Gastrocnemius medialis (tissue), 4 donors: ENCODE measurements at regions of chr5 and their contacts with region 1.

Region 1: GRCh38 chr5:16934123-16934522 is 2.0 kb downstream of the MYO10 start:
- DNase-seq: no peak
- ATAC-seq: no peak
- H3K4me3 ChIP-seq: peak overlapping the region; percentile 71 to 99 (median 80)
- H3K27ac ChIP-seq: no peak overlapping the region
- H3K4me1 ChIP-seq: peaks cover 0 to 10% of the 10 kb centered on the region in 2 donors
- H3K27me3 ChIP-seq: peaks cover 0 to 37% (median 28%) of the 10 kb centered on the region in 3 donors
- CTCF ChIP-seq: peak; percentile 10 to 73 (median 66)
- POLR2A ChIP-seq: no peak

Region 2: GRCh38 chr5:16552666-16553343 is 381.3 kb before region 1 on chr5:
- in situ Hi-C with region 1: no loop called
- intact Hi-C with region 1: loop called (anchors 10 kb)
- DNase-seq: peak; percentile 75 to 86
- ATAC-seq: peak; percentile 67 to 81
- H3K4me3 ChIP-seq: no peak overlapping the region
- H3K27ac ChIP-seq: peak overlapping the region; percentile 90 to 97 (median 94)
- H3K4me1 ChIP-seq: peaks cover 22 to 25% of the 10 kb centered on the region in 2 donors
- H3K27me3 ChIP-seq: no peaks in the 10 kb centered on the region
- CTCF ChIP-seq: peak; percentile 75 to 84 (median 81)
- POLR2A ChIP-seq: no peak

Region 3: GRCh38 chr5:16776611-16777251 is 157.4 kb before region 1 on chr5:
- in situ Hi-C with region 1: no loop called
- intact Hi-C with region 1: no loop called
- DNase-seq: peak; percentile 87 to 93
- ATAC-seq: peak; percentile 89 to 93
- H3K4me3 ChIP-seq: no peak overlapping the region
- H3K27ac ChIP-seq: peak overlapping the region; percentile 80 to 88 (median 82)
- H3K4me1 ChIP-seq: peaks cover 29 to 34% of the 10 kb centered on the region in 2 donors
- H3K27me3 ChIP-seq: no peaks in the 10 kb centered on the region
- CTCF ChIP-seq: peak; percentile 55 to 78 (median 67)
- POLR2A ChIP-seq: no peak

Region 4: GRCh38 chr5:16809395-16810207 is 124.5 kb before region 1 on chr5:
- in situ Hi-C with region 1: no loop called
- intact Hi-C with region 1: loop called (anchors 5 kb)
- DNase-seq: peak in 1 of 2 donors; percentile 25
- ATAC-seq: peak in 1 of 2 donors; percentile 56
- H3K4me3 ChIP-seq: no peak overlapping the region
- H3K27ac ChIP-seq: peak overlapping the region in 1 of 4 donors; percentile 19
- H3K4me1 ChIP-seq: peaks cover 4 to 24% of the 10 kb centered on the region in 2 donors
- H3K27me3 ChIP-seq: no peaks in the 10 kb centered on the region
- CTCF ChIP-seq: no peak
- POLR2A ChIP-seq: no peak

Region 5: DNA sequence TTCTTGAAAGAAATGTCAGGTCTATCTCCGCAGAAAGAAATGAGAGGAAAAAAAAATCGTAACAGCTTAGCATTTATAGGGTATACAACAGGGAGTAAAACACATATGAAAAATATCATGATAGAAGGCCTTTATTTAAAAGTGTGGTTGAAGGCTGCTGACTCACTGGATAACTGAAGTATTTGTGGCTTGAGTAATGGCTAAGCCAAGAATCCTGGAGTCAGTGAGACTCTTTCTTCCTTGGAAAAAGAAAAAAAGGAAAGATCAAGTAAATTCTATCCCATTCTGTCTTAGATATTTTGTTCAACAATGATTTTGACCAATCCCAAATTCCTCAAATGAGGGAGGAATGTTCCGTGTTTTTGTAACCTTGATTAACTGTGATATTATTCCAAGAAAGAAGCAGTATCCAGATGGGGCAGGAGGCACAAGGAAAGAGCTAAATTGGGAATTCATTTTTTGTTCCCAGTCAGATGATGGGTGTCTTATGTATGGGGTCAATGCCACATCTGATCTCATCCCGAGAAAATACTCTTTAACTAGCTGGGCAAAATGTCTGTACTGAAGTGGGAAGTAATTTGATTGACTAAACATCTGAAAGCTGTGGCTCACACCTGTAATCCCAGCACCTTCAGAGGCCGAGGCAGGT is 66.3 kb after region 1 on chr5:
- in situ Hi-C with region 1: no loop called
- intact Hi-C with region 1: loop called (anchors 1 kb)
- DNase-seq: no peak
- ATAC-seq: peak in 1 of 2 donors; percentile 8
- H3K4me3 ChIP-seq: no peak overlapping the region
- H3K27ac ChIP-seq: peak overlapping the region in 1 of 4 donors; percentile 14
- H3K4me1 ChIP-seq: peaks cover 18 to 23% of the 10 kb centered on the region in 2 donors
- H3K27me3 ChIP-seq: no peaks in the 10 kb centered on the region
- CTCF ChIP-seq: no peak
- POLR2A ChIP-seq: no peak

Region 6: DNA sequence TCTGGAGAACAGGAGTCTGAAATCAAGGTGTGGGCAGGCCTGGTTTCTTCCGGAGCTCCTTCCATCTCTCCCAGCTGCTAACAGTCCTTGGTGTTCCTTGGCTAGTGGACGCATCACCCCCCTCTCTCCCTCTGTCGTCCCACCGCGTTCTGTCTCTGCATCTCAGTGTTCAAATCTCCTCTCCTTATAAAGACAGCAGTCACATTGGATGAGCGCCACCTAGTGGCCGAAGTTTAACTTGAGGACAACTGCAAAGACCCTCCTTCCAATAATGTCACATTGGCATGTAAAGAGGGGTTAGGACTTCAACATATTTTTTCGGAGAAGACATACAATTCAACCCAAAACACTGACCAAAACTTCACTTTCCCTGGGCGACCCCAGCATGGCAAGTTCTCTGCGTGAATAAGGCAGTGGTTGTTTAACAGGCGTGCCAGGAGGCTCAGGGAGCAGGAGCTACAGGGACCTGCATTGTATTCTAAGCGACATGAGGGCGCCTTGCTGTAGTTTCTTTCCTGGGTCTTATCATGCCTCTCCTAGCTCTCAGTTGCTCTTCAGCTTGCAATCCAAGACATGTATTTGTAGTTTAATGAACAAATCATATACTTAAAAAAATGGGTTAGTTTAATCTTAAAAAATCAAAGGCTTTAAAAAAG is 255.4 kb after region 1 on chr5:
- in situ Hi-C with region 1: loop called in 2 of 4 experiments (anchors 10 to 25 kb)
- intact Hi-C with region 1: loop called (anchors 2 kb)
- DNase-seq: peak; percentile 24 to 54
- ATAC-seq: peak in 1 of 2 donors; percentile 47
- H3K4me3 ChIP-seq: no peak overlapping the region
- H3K27ac ChIP-seq: peak overlapping the region in 1 of 4 donors; percentile 3
- H3K4me1 ChIP-seq: peaks cover 15 to 28% of the 10 kb centered on the region in 2 donors
- H3K27me3 ChIP-seq: no peaks in the 10 kb centered on the region
- CTCF ChIP-seq: peak; percentile 64 to 87 (median 76)
- POLR2A ChIP-seq: no peak